Activated CD4-positive, alpha-beta T cell treated with anti-CD3 and anti-CD28 coated beads for 36 hours (primary cell): ENCODE measurements at regions of chr4 and their contacts with region 1.

Region 1: GRCh38 chr4:153127760-153128494 is 76.3 kb upstream of the TRIM2 start:
- DNase-seq: peak; percentile 91
- ATAC-seq: peak; percentile 86
- H3K4me3 Mint-ChIP-seq: no peak overlapping the region
- H3K27ac Mint-ChIP-seq: no peak overlapping the region
- H3K4me1 Mint-ChIP-seq: peaks cover 7% of the 10 kb centered on the region
- H3K27me3 Mint-ChIP-seq: no peaks in the 10 kb centered on the region

Region 2: DNA sequence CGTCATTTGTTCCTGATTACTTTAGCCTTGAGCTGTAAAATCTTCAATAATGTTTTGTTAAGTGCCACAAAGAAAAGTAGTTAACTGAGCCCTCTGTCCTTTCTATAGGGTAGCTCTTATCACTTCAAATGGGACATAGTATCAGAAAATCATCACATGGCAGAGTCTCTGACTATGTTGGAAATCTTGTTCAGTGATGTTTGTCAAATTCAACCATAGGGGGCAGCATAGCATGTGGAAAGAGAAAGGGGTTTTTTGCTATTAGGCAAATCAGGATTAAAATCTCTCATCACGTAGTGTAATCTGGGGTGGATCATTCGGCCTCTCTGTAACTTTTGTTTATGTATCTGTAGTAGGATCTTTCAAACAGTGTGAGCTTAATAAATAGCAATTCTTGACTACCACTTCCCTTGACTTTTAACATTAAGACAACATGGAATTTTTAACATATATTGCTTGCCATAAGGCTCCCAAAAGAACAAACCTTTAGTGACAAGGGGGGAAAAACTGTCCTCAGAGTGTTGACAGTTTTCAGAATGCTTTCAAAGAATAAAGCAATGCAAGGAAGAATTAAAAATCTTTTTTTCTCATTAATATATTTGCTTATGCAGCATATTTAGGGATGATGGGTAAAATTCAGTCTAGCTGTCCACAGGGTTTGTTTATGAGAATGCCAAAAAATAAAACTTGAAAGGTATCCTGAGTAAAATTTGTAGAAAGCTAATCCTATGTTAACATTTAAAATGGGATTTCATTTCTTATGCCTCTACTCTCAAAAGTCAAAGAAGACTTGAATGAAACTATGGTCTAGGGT is 719.2 kb before region 1 on chr4:
- CTCF ChIA-PET with region 1: no interaction called
- POLR2A ChIA-PET with region 1: no interaction called
- intact Hi-C with region 1: loop called in 1 of 2 experiments (anchors 1 kb)
- DNase-seq: peak; percentile 18
- ATAC-seq: peak; percentile 65
- H3K4me3 Mint-ChIP-seq: no peak overlapping the region
- H3K27ac Mint-ChIP-seq: no peak overlapping the region
- H3K4me1 Mint-ChIP-seq: peaks cover 13% of the 10 kb centered on the region
- H3K27me3 Mint-ChIP-seq: no peaks in the 10 kb centered on the region

Region 3: GRCh38 chr4:152937336-152938236 is 190.3 kb before region 1 on chr4:
- CTCF ChIA-PET with region 1: interaction called, 11 read pairs
- POLR2A ChIA-PET with region 1: no interaction called
- intact Hi-C with region 1: loop called (anchors 5 kb)
- DNase-seq: peak; percentile 35
- ATAC-seq: no peak
- H3K4me3 Mint-ChIP-seq: peak overlapping the region; percentile 59
- H3K27ac Mint-ChIP-seq: no peak overlapping the region
- H3K4me1 Mint-ChIP-seq: peaks cover 15% of the 10 kb centered on the region
- H3K27me3 Mint-ChIP-seq: peaks cover 48% of the 10 kb centered on the region

Region 4: GRCh38 chr4:153083447-153083947 is 44.4 kb before region 1 on chr4:
- CTCF ChIA-PET with region 1: interaction called, 345 read pairs
- POLR2A ChIA-PET with region 1: interaction called, 5 read pairs
- intact Hi-C with region 1: loop called (anchors 1 kb)
- DNase-seq: peak; percentile 64
- ATAC-seq: peak; percentile 52
- H3K4me3 Mint-ChIP-seq: no peak overlapping the region
- H3K27ac Mint-ChIP-seq: no peak overlapping the region
- H3K4me1 Mint-ChIP-seq: peaks cover 29% of the 10 kb centered on the region
- H3K27me3 Mint-ChIP-seq: peaks cover 4% of the 10 kb centered on the region

Region 5: GRCh38 chr4:153095448-153096204 is 32.3 kb before region 1 on chr4:
- CTCF ChIA-PET with region 1: interaction called, 42 read pairs
- POLR2A ChIA-PET with region 1: no interaction called
- intact Hi-C with region 1: no loop called
- DNase-seq: no peak
- ATAC-seq: no peak
- H3K4me3 Mint-ChIP-seq: no peak overlapping the region
- H3K27ac Mint-ChIP-seq: no peak overlapping the region
- H3K4me1 Mint-ChIP-seq: peaks cover 4% of the 10 kb centered on the region
- H3K27me3 Mint-ChIP-seq: no peaks in the 10 kb centered on the region

Region 6: GRCh38 chr4:153115322-153116290 is 12.3 kb before region 1 on chr4:
- CTCF ChIA-PET with region 1: interaction called, 53 read pairs
- POLR2A ChIA-PET with region 1: interaction called, 8 read pairs
- intact Hi-C with region 1: no loop called
- DNase-seq: peak; percentile 87
- ATAC-seq: peak; percentile 59
- H3K4me3 Mint-ChIP-seq: no peak overlapping the region
- H3K27ac Mint-ChIP-seq: no peak overlapping the region
- H3K4me1 Mint-ChIP-seq: peaks cover 2% of the 10 kb centered on the region
- H3K27me3 Mint-ChIP-seq: no peaks in the 10 kb centered on the region

Region 7: DNA sequence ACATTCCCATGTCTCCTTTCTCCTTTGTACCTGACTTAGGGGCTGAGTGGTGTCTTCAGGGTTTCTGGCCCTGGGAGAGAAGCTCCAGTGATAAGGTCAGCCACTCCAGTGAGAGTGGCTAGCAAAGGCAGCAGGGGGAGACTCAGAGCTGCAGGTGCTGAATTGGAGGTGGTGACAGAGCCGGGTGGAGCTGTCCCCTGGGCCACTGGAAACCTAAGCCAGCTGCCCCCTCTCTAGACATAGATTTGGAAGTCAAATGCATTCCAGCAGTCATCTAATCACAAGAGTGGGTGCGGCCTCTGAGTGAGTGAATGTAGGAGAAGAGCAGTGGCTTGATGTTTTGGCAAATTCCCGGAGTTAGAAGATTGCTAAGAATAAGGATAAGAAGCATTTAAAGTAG is 104.8 kb after region 1 on chr4:
- CTCF ChIA-PET with region 1: no interaction called
- POLR2A ChIA-PET with region 1: no interaction called
- intact Hi-C with region 1: no loop called
- DNase-seq: peak; percentile 32
- ATAC-seq: peak; percentile 60
- H3K4me3 Mint-ChIP-seq: no peak overlapping the region
- H3K27ac Mint-ChIP-seq: no peak overlapping the region
- H3K4me1 Mint-ChIP-seq: peaks cover 30% of the 10 kb centered on the region
- H3K27me3 Mint-ChIP-seq: no peaks in the 10 kb centered on the region

Region 8: GRCh38 chr4:153521999-153522801 is 394.3 kb after region 1 on chr4:
- CTCF ChIA-PET with region 1: no interaction called
- POLR2A ChIA-PET with region 1: no interaction called
- intact Hi-C with region 1: no loop called
- DNase-seq: peak; percentile 83
- ATAC-seq: peak; percentile 79
- H3K4me3 Mint-ChIP-seq: peak overlapping the region; percentile 61
- H3K27ac Mint-ChIP-seq: peak overlapping the region; percentile 98
- H3K4me1 Mint-ChIP-seq: peaks cover 95% of the 10 kb centered on the region
- H3K27me3 Mint-ChIP-seq: no peaks in the 10 kb centered on the region